Activated CD4-positive, alpha-beta T cell treated with anti-CD3 and anti-CD28 coated beads for 36 hours (primary cell): ENCODE measurements at regions of chr1 and their contacts with region 1.

Region 1: DNA sequence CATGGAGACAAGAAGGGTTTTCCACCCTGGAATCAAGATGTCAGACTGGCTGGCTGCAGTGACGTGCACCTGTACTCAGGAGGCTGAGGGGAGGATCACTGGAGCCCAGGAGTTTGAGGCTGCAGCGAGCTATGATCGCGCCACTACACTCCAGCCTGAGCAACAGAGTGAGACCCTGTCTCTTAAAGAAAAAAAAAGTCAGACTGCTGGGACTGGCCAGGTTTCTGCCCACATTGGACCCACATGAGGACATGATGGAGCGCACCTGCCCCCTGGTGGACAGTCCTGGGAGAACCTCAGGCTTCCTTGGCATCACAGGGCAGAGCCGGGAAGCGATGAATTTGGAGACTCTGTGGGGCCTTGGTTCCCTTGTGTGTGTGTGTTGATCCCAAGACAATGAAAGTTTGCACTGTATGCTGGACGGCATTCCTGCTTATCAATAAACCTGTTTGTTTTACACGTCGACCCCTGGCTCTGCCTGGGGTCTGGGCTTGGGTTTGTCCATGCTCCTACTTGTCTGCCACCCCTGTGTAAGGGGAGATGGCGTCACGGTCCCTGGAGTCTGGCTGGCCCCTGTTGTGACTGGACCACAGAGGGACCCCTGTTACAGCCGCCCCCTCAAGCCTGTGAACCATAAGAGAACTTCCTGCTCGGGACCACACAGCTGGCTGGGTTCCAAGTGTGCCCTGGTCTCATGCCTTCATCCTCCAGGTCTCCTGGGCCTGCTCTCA is 20.9 kb upstream of the VPS13D start:
- DNase-seq: peak; percentile 93
- ATAC-seq: peak; percentile 68
- H3K4me3 Mint-ChIP-seq: no peak overlapping the region
- H3K27ac Mint-ChIP-seq: peak overlapping the region; percentile 17
- H3K4me1 Mint-ChIP-seq: peaks cover 47% of the 10 kb centered on the region
- H3K27me3 Mint-ChIP-seq: no peaks in the 10 kb centered on the region

Region 2: DNA sequence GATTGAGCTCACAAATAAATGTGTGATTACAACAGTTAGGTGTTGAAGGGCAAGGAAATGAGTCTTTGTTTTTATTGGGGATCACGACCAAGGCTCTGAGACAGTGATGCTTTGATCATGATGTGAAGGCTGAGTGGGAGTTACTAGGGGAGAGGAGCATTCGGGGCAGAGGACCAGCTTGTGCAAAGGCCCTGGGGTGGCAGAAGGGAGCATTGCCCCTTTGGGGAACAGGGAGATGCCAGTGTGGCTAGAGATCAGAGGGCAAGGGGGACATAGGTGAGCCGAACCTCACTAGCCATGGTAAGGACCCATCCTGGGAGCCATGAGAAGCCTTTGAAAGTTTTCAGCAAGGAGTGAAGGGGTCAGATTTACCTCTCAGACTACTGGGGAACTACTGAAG is 114.7 kb before region 1 on chr1:
- CTCF ChIA-PET with region 1: no interaction called
- POLR2A ChIA-PET with region 1: no interaction called
- intact Hi-C with region 1: no loop called
- DNase-seq: no peak
- ATAC-seq: no peak
- H3K4me3 Mint-ChIP-seq: no peak overlapping the region
- H3K27ac Mint-ChIP-seq: no peak overlapping the region
- H3K4me1 Mint-ChIP-seq: peaks cover 17% of the 10 kb centered on the region
- H3K27me3 Mint-ChIP-seq: no peaks in the 10 kb centered on the region

Region 3: GRCh38 chr1:12166834-12167492 is 42.0 kb before region 1 on chr1 and contains the start of gene TNFRSF1B:
- CTCF ChIA-PET with region 1: interaction called, 3 read pairs
- POLR2A ChIA-PET with region 1: no interaction called
- intact Hi-C with region 1: loop called (anchors 5 kb)
- DNase-seq: peak; percentile 83
- ATAC-seq: peak; percentile 53
- H3K4me3 Mint-ChIP-seq: peak within 1 kb of the TSS; percentile 98
- H3K27ac Mint-ChIP-seq: peak within 1 kb of the TSS; percentile 99
- H3K4me1 Mint-ChIP-seq: peaks cover 63% of the 10 kb centered on the region
- H3K27me3 Mint-ChIP-seq: no peaks in the 10 kb centered on the region
- total RNA-seq, gene TNFRSF1B: 107 to 116 TPM

Region 4: GRCh38 chr1:12184008-12184681 is 24.8 kb before region 1 on chr1:
- CTCF ChIA-PET with region 1: interaction called, 10 read pairs
- POLR2A ChIA-PET with region 1: interaction called, 3 read pairs
- intact Hi-C with region 1: loop called in 1 of 2 experiments (anchors 2 kb)
- DNase-seq: no peak
- ATAC-seq: no peak
- H3K4me3 Mint-ChIP-seq: no peak overlapping the region
- H3K27ac Mint-ChIP-seq: peak overlapping the region; percentile 4
- H3K4me1 Mint-ChIP-seq: peaks cover 56% of the 10 kb centered on the region
- H3K27me3 Mint-ChIP-seq: no peaks in the 10 kb centered on the region